ENCODE measurements at regions of chr6 and their contacts with region 1.

Region 1: GRCh38 chr6:2900821-2901644 is 2.1 kb downstream of the SERPINB9 start:
- DNase-seq: no peak
- H3K4me3 ChIP-seq: peak overlapping the region; percentile 73
- H3K27ac ChIP-seq: peak overlapping the region; percentile 81
- H3K4me1 ChIP-seq: peaks cover 69% of the 10 kb centered on the region
- CTCF ChIP-seq: no peak

Region 2: DNA sequence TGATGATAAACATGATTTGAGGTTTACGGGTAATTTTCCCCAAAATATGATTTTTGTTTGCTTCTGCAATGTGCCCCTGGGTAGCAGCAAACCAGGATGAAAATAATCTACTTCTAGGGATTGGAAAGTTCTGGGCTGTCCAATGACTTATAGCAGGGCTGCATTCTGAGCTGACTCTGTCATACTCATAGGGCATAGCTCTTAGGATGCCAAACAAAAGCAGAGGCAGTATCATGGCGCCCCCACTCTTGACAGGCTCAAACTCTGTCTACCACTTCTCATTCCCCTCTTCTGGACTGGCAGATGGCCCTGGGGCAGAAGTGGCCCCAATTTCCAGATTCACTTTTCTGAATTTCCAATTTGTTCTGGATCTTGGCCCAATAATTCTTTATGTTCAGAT is 69.6 kb before region 1 on chr6:
- CTCF ChIA-PET with region 1: no interaction called
- POLR2A ChIA-PET with region 1: no interaction called
- intact Hi-C with region 1: no loop called
- DNase-seq: no peak
- H3K4me3 ChIP-seq: no peak overlapping the region
- H3K27ac ChIP-seq: no peak overlapping the region
- H3K4me1 ChIP-seq: no peaks in the 10 kb centered on the region
- CTCF ChIP-seq: no peak

Region 3: DNA sequence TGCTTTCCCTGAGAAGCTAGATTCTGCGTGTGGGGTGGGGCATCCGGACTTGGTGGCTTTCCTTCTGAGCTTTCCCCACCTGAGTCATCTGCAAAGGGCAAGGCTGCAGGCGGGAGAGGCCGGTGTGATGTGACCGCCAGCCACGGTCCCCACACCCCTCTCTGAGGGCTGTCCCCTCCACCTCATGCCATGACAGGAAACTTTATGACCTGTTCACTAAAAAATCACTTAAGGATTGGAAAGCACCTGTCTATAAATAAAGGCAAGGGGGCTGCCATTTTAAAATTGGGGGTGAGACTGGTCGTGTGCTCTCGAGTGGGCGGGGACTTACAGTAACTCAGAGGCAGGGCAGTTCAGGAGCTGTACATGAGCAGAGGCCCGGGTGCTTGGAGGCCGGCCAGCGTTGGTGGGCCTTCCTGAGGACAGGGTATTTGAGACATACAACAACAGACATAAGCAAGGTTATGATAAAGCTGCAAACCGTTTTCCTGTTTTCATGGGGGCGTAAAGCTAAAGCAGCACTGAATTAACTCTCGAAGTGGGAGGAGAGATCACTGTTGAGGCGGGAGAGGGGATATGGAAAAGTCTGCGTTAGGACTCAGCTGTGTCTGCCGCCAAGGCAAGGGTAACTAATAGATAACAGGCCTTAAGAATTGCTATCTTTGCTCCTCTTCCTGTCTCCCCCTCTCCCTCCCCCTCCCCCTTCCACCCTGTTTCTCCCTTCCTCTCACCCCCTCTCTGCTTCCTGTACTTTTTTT is 43.3 kb before region 1 on chr6:
- CTCF ChIA-PET with region 1: no interaction called
- POLR2A ChIA-PET with region 1: interaction called, 11 read pairs
- intact Hi-C with region 1: loop called (anchors 2 kb)
- DNase-seq: peak; percentile 70
- H3K4me3 ChIP-seq: peak overlapping the region; percentile 39
- H3K27ac ChIP-seq: peak overlapping the region; percentile 99
- H3K4me1 ChIP-seq: peaks cover 96% of the 10 kb centered on the region
- CTCF ChIP-seq: no peak

Region 4: DNA sequence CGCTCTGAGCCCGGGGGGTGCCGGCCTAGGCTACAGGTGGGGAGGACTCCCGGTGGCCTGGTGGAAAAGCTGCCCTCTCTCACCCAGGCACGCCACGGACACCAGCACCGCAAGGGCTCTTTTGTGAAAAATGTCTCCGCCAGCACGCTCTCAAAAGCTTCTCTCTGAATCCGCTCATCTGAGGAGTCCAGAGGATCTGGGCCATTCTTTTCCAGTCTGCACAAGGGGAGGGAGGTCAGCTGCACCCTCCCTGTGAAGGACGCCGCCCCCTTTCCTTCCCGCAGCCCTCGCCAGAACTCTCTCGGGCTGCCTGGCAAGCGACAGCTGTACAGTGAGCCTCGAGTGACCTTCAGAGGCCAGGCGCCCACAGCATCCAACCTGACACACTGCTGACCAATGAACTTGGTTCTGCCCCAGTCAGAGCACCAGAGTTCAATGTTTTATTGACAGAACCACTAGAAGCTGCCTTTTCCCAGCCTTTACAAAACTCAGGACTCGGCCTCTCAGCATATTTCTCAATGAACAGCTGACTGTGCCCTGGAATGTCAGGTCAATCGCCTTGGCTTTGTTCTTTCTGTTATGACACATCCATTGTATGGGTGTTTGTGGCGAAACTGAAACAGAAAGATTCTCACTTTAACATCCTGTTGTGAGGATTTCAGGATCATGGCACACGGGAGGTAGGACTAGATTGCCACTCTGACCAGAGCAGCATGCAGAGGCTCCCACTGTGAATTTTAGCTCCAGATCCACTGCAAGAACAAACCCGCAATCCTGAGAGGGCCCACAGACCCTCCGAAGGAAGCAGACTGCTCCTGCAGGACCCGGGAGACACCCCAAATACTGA is 24.6 kb before region 1 on chr6:
- CTCF ChIA-PET with region 1: interaction called, 3 read pairs
- POLR2A ChIA-PET with region 1: interaction called, 16 read pairs
- intact Hi-C with region 1: no loop called
- DNase-seq: peak; percentile 58
- H3K4me3 ChIP-seq: peak overlapping the region; percentile 67
- H3K27ac ChIP-seq: peak overlapping the region; percentile 79
- H3K4me1 ChIP-seq: peaks cover 88% of the 10 kb centered on the region
- CTCF ChIP-seq: no peak

Region 5: GRCh38 chr6:2911171-2911570 is 10.1 kb after region 1 on chr6:
- CTCF ChIA-PET with region 1: no interaction called
- POLR2A ChIA-PET with region 1: interaction called, 10 read pairs
- intact Hi-C with region 1: no loop called
- DNase-seq: peak; percentile 87
- H3K4me3 ChIP-seq: peak overlapping the region; percentile 43
- H3K27ac ChIP-seq: peak overlapping the region; percentile 87
- H3K4me1 ChIP-seq: peaks cover 57% of the 10 kb centered on the region
- CTCF ChIP-seq: no peak

Region 6: GRCh38 chr6:2971420-2972218 is 70.6 kb after region 1 on chr6 and contains the start of gene SERPINB6:
- CTCF ChIA-PET with region 1: no interaction called
- POLR2A ChIA-PET with region 1: no interaction called
- intact Hi-C with region 1: no loop called
- DNase-seq: no peak
- H3K4me3 ChIP-seq: peak within 1 kb of the TSS; percentile 37
- H3K27ac ChIP-seq: no peak within 1 kb of the TSS
- H3K4me1 ChIP-seq: peaks cover 6% of the 10 kb centered on the region
- CTCF ChIP-seq: no peak
- total RNA-seq, gene SERPINB6: not detected in 2 replicates